Activated T-helper 1 cell treated with anti-CD3 and anti-CD28 coated beads, Interleukin-12 subunit alpha, Interleukin-12 subunit beta, Interleukin-2, Interleukin-4 antibody, amounts not matched to agents 30 ng/mL and 10 ng/mL and 1 ng/mL, durations not matched to agents 14 hours and 24 hours and 36 hours (primary cell): ENCODE measurements at regions of chr6 and their contacts with region 1.

Region 1: DNA sequence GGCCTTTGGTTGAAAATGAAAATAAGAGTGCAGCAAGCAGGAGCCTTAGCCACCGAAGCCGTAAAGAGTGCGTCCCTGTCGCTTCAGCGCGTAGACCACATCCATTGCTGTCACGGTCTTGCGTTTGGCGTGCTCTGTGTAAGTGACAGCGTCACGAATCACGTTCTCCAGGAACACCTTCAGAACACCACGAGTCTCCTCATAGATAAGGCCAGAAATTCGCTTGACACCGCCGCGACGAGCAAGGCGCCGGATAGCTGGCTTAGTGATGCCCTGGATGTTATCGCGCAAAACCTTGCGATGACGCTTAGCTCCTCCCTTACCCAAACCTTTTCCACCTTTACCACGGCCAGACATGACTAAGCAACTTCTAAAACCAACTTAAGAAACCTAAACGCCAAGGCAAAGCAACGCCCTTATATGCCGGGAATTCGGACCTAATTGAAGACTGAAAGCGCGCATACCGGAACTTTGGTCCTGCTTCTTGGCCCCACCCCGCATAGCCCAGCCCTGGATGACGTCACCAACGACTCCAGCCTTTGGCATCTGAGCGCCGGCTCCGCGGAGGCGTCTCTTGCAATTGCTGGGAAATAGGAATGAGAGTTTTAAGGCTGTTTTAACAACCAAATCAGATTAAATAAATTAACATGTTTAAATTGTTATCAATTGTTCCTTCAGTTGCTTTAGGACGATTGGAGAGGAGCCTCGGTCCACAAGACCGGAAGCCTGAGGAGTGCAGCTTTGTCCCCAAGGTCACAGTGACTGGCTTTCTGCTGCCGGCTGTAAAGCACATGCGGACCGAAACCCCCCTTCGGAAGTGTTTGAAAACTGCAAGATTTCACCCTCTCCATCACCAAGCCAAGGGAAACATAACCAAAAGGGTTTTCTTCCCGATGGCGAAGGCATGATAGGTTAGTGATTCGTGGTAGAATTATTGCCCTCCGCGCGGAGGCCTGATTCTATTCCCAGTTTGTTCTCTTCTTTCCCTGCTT is 79.6 kb upstream of the BTN3A2 start:
- DNase-seq: peak; percentile 95
- H3K4me3 Mint-ChIP-seq: peak overlapping the region; percentile 93
- H3K27ac Mint-ChIP-seq: peak overlapping the region; percentile 93
- H3K4me1 Mint-ChIP-seq: peaks cover 44% of the 10 kb centered on the region
- H3K27me3 Mint-ChIP-seq: peaks cover 4% of the 10 kb centered on the region

Region 2: DNA sequence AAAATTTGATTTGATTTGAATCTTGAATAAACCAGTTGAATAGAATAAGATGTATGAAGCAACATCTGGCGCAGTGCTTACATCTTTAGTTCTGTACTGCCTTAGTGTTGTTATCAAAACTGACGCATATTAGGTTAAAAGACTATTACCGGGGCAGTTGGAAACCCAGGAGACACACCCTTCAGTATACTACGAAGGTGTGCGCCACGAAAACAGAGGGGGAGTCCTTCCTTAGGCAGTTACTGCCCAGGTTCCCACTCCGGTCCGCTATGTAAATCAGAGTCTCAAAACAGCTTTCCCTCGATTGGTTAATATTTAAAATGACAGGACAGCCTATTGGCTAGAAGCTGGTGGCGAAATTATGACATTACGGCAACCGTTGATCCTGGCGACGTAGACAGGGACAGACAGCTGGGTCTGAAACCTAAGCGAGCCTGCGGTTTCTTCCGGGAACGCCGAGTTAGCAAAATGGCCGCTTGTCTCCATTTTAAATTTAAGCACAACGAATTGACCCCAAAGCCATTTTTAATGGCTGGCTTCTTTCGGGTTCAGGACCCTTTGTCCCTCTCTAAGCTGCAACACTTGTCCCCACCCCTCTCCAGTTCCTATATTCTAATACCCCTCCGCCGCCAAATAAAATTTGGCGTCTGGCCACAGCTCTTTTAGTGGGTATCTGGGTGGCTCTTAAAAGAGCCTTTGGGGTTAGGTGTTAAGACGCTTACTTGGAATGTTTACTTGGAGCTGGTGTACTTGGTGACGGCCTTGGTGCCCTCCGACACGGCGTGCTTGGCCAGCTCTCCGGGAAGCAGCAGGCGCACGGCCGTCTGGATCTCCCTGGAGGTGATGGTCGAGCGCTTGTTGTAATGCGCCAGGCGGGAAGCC is 162.4 kb before region 1 on chr6:
- intact Hi-C with region 1: loop called (anchors 1 kb)
- DNase-seq: peak; percentile 86
- H3K4me3 Mint-ChIP-seq: peak overlapping the region; percentile 99
- H3K27ac Mint-ChIP-seq: peak overlapping the region; percentile 100
- H3K4me1 Mint-ChIP-seq: peaks cover 49% of the 10 kb centered on the region
- H3K27me3 Mint-ChIP-seq: peaks cover 3% of the 10 kb centered on the region

Region 3: DNA sequence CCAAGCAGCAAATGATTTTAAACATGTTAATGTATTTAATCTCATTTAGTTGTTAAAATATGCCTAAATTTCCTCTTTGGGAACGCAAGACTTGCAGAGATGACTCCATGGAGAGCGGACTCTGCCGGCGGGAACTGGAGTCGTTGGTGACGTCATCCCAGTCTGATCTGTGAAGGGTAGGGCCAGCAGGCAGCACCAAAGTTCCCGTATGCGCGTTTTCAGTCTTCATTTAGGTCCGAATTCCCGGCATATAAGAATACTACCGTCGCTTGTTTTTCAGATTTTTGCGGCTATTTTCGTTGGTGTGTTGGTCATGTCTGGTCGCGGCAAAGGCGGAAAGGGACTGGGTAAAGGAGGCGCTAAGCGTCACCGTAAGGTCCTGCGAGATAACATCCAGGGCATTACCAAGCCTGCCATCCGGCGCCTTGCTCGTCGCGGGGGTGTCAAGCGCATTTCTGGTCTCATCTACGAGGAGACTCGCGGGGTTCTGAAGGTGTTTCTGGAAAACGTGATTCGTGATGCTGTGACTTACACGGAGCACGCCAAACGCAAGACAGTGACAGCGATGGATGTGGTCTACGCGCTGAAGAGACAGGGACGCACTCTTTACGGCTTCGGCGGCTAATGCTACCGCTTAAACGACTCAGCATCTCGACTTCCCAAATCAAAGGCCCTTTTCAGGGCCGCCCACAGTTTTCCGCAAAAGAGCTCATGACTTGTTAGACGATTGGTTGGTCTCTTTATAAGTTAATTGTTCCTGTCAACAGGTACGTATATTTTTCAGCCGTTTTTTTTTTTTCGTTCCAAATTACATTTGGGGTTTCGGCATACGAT is 80.9 kb before region 1 on chr6:
- intact Hi-C with region 1: loop called (anchors 1 kb)
- DNase-seq: peak; percentile 82
- H3K4me3 Mint-ChIP-seq: no peak overlapping the region
- H3K27ac Mint-ChIP-seq: no peak overlapping the region
- H3K4me1 Mint-ChIP-seq: peaks cover 33% of the 10 kb centered on the region
- H3K27me3 Mint-ChIP-seq: peaks cover 2% of the 10 kb centered on the region

Region 4: DNA sequence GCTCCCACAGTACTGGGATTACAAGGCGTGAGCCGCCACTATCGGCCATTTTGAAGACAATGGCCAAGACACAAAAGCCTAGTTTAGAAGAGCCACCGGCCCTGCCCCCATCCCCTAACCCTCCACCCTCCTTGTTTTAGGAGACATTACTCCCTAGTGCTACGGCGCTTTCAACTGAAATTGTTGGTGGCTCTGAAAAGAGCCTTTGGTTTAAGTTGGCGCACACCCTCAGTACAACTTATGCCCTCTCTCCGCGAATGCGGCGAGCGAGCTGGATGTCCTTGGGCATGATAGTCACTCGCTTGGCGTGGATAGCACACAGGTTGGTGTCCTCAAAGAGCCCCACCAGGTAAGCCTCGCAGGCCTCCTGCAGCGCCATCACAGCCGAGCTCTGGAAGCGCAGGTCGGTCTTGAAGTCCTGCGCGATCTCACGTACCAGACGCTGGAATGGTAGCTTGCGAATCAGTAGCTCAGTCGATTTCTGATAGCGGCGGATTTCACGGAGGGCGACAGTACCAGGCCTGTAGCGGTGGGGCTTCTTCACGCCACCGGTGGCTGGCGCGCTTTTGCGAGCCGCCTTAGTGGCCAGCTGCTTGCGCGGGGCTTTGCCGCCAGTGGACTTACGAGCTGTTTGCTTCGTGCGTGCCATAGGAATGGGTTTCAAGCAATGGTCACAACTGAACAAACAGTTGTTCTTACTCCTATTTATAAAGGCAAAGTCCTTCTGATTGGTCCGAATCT is 35.3 kb before region 1 on chr6:
- intact Hi-C with region 1: loop called (anchors 1 kb)
- DNase-seq: peak; percentile 68
- H3K4me3 Mint-ChIP-seq: peak overlapping the region; percentile 90
- H3K27ac Mint-ChIP-seq: peak overlapping the region; percentile 99
- H3K4me1 Mint-ChIP-seq: peaks cover 55% of the 10 kb centered on the region
- H3K27me3 Mint-ChIP-seq: peaks cover 2% of the 10 kb centered on the region

Region 5: GRCh38 chr6:26322645-26323482 is 37.4 kb after region 1 on chr6:
- intact Hi-C with region 1: loop called (anchors 2 kb)
- DNase-seq: peak; percentile 63
- H3K4me3 Mint-ChIP-seq: peak overlapping the region; percentile 89
- H3K27ac Mint-ChIP-seq: peak overlapping the region; percentile 51
- H3K4me1 Mint-ChIP-seq: peaks cover 51% of the 10 kb centered on the region
- H3K27me3 Mint-ChIP-seq: peaks cover 14% of the 10 kb centered on the region

Region 6: DNA sequence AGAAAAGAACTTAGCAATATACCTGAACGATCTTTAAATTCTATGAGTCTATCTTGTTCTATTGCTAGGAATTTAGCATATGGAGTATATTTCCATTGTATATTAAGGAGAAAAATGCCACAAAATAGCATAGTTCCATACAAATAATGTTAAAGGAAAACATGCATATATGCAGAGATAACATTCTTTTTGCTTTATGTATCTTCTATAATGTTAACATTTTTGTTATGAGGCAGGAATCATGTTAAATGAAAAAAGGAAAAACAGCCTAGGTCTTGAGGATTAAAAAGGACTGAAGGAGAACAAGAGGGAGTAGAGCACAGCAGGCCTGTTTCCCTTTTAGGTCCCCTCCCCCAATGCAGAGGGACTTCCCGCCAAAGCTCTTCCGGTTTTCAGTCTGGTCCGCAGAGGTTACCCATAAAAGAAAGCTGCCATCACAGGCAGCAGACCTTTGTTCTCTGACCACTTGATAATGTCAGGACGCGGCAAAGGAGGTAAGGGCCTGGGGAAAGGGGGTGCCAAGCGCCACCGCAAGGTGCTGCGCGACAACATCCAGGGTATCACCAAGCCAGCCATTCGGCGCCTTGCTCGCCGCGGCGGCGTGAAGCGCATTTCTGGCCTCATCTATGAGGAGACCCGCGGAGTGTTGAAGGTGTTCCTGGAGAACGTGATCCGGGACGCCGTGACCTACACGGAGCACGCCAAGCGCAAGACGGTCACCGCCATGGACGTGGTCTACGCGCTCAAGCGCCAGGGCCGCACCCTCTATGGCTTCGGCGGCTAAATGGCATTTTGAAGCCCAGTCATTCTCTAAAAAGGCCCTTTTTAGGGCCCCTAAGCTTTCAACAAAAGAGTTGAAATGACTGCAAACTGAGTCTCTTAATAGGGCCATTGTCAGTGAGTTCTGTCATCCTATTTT is 853.7 kb after region 1 on chr6:
- intact Hi-C with region 1: loop called (anchors 2 kb)
- DNase-seq: peak; percentile 71
- H3K4me3 Mint-ChIP-seq: peak overlapping the region; percentile 96
- H3K27ac Mint-ChIP-seq: peak overlapping the region; percentile 97
- H3K4me1 Mint-ChIP-seq: peaks cover 49% of the 10 kb centered on the region
- H3K27me3 Mint-ChIP-seq: no peaks in the 10 kb centered on the region